Naive thymus-derived CD4-positive, alpha-beta T cell (primary cell): ENCODE measurements at regions of chr5 and their contacts with region 1.

Region 1: GRCh38 chr5:135034236-135034962 is 371 bp upstream of the PITX1 start:
- DNase-seq: peak in 1 of 9 donors; percentile 51
- ATAC-seq: no peak
- H3K4me3 ChIP-seq: no peak overlapping the region
- H3K4me3 Mint-ChIP-seq: peak overlapping the region; percentile 68 to 87 (median 79)
- H3K27ac ChIP-seq: no peak overlapping the region
- H3K27ac Mint-ChIP-seq: peak overlapping the region in 1 of 9 donors; percentile 82
- H3K4me1 ChIP-seq: peaks cover 0 to 14% of the 10 kb centered on the region in 2 donors
- H3K4me1 Mint-ChIP-seq: peaks cover 27 to 54% (median 42%) of the 10 kb centered on the region in 7 donors
- H3K27me3 ChIP-seq: peaks cover 0 to 42% of the 10 kb centered on the region in 2 donors
- H3K27me3 Mint-ChIP-seq: peaks cover 74 to 84% (median 77%) of the 10 kb centered on the region in 5 donors

Region 2: GRCh38 chr5:133763744-133764143 is 1270.7 kb before region 1 on chr5:
- CTCF ChIA-PET with region 1: no interaction called
- POLR2A ChIA-PET with region 1: no interaction called
- intact Hi-C with region 1: no loop called
- DNase-seq: no peak
- ATAC-seq: no peak
- H3K4me3 ChIP-seq: no peak overlapping the region
- H3K4me3 Mint-ChIP-seq: no peak overlapping the region
- H3K27ac ChIP-seq: no peak overlapping the region
- H3K27ac Mint-ChIP-seq: no peak overlapping the region
- H3K4me1 ChIP-seq: no peaks in the 10 kb centered on the region
- H3K4me1 Mint-ChIP-seq: no peaks in the 10 kb centered on the region
- H3K27me3 ChIP-seq: no peaks in the 10 kb centered on the region
- H3K27me3 Mint-ChIP-seq: peaks cover 16 to 39% (median 18%) of the 10 kb centered on the region in 5 donors

Region 3: GRCh38 chr5:134053840-134054338 is 980.5 kb before region 1 on chr5:
- CTCF ChIA-PET with region 1: no interaction called
- POLR2A ChIA-PET with region 1: no interaction called
- intact Hi-C with region 1: no loop called
- DNase-seq: peak in 5 of 9 donors; percentile 25 to 42 (median 36)
- ATAC-seq: peak; percentile 78
- H3K4me3 ChIP-seq: no peak overlapping the region
- H3K4me3 Mint-ChIP-seq: peak overlapping the region; percentile 52 to 88 (median 74)
- H3K27ac ChIP-seq: peak overlapping the region; percentile 58
- H3K27ac Mint-ChIP-seq: peak overlapping the region; percentile 72 to 97 (median 90)
- H3K4me1 ChIP-seq: peaks cover 7 to 50% of the 10 kb centered on the region in 2 donors
- H3K4me1 Mint-ChIP-seq: peaks cover 24 to 61% (median 46%) of the 10 kb centered on the region in 7 donors
- H3K27me3 ChIP-seq: no peaks in the 10 kb centered on the region
- H3K27me3 Mint-ChIP-seq: no peaks in the 10 kb centered on the region

Region 4: GRCh38 chr5:134964359-134965270 is 69.8 kb before region 1 on chr5:
- CTCF ChIA-PET with region 1: no interaction called
- POLR2A ChIA-PET with region 1: no interaction called
- intact Hi-C with region 1: loop called in 1 of 2 experiments (anchors 10 kb)
- DNase-seq: peak in 7 of 9 donors; percentile 68 to 84 (median 79)
- ATAC-seq: peak; percentile 86
- H3K4me3 ChIP-seq: no peak overlapping the region
- H3K4me3 Mint-ChIP-seq: peak overlapping the region in 9 of 10 donors; percentile 37 to 78 (median 67)
- H3K27ac ChIP-seq: peak overlapping the region; percentile 42
- H3K27ac Mint-ChIP-seq: peak overlapping the region; percentile 85 to 95 (median 94)
- H3K4me1 ChIP-seq: peaks cover 0 to 28% of the 10 kb centered on the region in 2 donors
- H3K4me1 Mint-ChIP-seq: peaks cover 13 to 39% (median 28%) of the 10 kb centered on the region in 7 donors
- H3K27me3 ChIP-seq: no peaks in the 10 kb centered on the region
- H3K27me3 Mint-ChIP-seq: no peaks in the 10 kb centered on the region

Region 5: GRCh38 chr5:135072387-135073281 is 38.2 kb after region 1 on chr5:
- CTCF ChIA-PET with region 1: no interaction called
- POLR2A ChIA-PET with region 1: no interaction called
- intact Hi-C with region 1: no loop called
- DNase-seq: no peak
- ATAC-seq: no peak
- H3K4me3 ChIP-seq: no peak overlapping the region
- H3K4me3 Mint-ChIP-seq: no peak overlapping the region
- H3K27ac ChIP-seq: no peak overlapping the region
- H3K27ac Mint-ChIP-seq: no peak overlapping the region
- H3K4me1 ChIP-seq: no peaks in the 10 kb centered on the region
- H3K4me1 Mint-ChIP-seq: no peaks in the 10 kb centered on the region
- H3K27me3 ChIP-seq: no peaks in the 10 kb centered on the region
- H3K27me3 Mint-ChIP-seq: peaks cover 0 to 16% (median 0%) of the 10 kb centered on the region in 5 donors

Region 6: DNA sequence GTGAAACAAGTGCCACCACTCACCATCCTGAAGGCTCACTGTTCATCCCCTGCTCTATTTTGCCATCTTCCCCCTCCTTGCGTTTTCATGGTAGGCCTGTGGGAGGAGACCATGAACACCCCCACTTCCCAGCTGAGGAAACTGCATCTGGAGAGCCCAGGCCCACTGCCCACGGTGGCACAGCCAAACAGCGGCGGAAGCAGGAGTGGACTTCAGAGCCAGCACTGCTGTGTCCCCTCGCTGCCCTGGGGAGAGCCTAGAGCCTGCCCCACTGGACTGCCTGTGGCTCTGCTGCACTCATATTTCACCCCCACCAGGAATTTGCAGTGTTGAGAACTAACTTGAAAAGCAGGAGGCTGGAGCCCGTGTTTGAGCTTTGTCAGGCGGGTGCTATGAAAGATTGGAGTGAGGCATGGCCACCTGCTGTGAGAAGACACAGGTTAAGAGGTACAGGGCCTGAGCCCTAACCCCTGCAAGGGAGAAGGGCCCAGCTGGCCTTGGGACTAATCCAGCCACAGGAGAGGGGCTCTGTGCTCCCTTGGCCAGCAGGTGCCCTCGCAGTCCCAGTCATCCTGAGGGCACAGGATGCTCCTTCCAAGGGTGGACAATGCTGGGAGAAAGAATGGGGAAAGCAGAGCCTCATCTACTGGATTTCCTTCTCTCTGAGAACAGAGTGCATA is 285.7 kb after region 1 on chr5:
- CTCF ChIA-PET with region 1: no interaction called
- POLR2A ChIA-PET with region 1: no interaction called
- intact Hi-C with region 1: loop called in 1 of 2 experiments (anchors 10 kb)
- DNase-seq: no peak
- ATAC-seq: no peak
- H3K4me3 ChIP-seq: no peak overlapping the region
- H3K4me3 Mint-ChIP-seq: no peak overlapping the region
- H3K27ac ChIP-seq: no peak overlapping the region
- H3K27ac Mint-ChIP-seq: no peak overlapping the region
- H3K4me1 ChIP-seq: peaks cover 0 to 9% of the 10 kb centered on the region in 2 donors
- H3K4me1 Mint-ChIP-seq: peaks cover 5 to 20% (median 8%) of the 10 kb centered on the region in 7 donors
- H3K27me3 ChIP-seq: no peaks in the 10 kb centered on the region
- H3K27me3 Mint-ChIP-seq: no peaks in the 10 kb centered on the region